Ovary (tissue), 10 donors: ENCODE measurements at regions of chr7 and their contacts with region 1.

Region 1: GRCh38 chr7:74479961-74480829 is 26.5 kb downstream of the GTF2IRD1 start:
- DNase-seq: peak; percentile 80 to 86 (median 85)
- H3K4me3 ChIP-seq: peak overlapping the region; percentile 28
- H3K27ac ChIP-seq: peak overlapping the region; percentile 86 to 91
- H3K4me1 ChIP-seq: peaks cover 23% of the 10 kb centered on the region
- H3K27me3 ChIP-seq: no peaks in the 10 kb centered on the region
- CTCF ChIP-seq: peak in 1 of 3 donors; percentile 15
- EP300 ChIP-seq: peak; percentile 38
- POLR2A ChIP-seq: peak; percentile 31

Region 2: GRCh38 chr7:74449809-74450397 is 30.3 kb before region 1 on chr7:
- intact Hi-C with region 1: loop called in 1 of 4 experiments (anchors 2 kb)
- DNase-seq: peak in 3 of 5 donors; percentile 38 to 51 (median 45)
- H3K4me3 ChIP-seq: no peak overlapping the region
- H3K27ac ChIP-seq: no peak overlapping the region
- H3K4me1 ChIP-seq: peaks cover 6% of the 10 kb centered on the region
- H3K27me3 ChIP-seq: no peaks in the 10 kb centered on the region
- CTCF ChIP-seq: peak in 2 of 3 donors; percentile 51 to 70
- EP300 ChIP-seq: no peak
- POLR2A ChIP-seq: no peak